B cell (primary cell): ENCODE measurements at regions of chrX and their contacts with region 1.

Region 1: GRCh38 chrX:111244235-111244750 is 26.0 kb downstream of the CAPN6 start:
- DNase-seq: no peak
- ATAC-seq: no peak
- H3K4me3 ChIP-seq: no peak overlapping the region
- H3K4me3 Mint-ChIP-seq: no peak overlapping the region
- H3K27ac ChIP-seq: no peak overlapping the region
- H3K27ac Mint-ChIP-seq: no peak overlapping the region
- H3K4me1 ChIP-seq: no peaks in the 10 kb centered on the region
- H3K4me1 Mint-ChIP-seq: no peaks in the 10 kb centered on the region
- H3K27me3 ChIP-seq: no peaks in the 10 kb centered on the region
- H3K27me3 Mint-ChIP-seq: peaks cover 7% of the 10 kb centered on the region
- CTCF ChIP-seq: no peak

Region 2: GRCh38 chrX:110992611-110993010 is 251.7 kb before region 1 on chrX:
- CTCF ChIA-PET with region 1: no interaction called
- POLR2A ChIA-PET with region 1: no interaction called
- intact Hi-C with region 1: loop called (anchors 5 kb)
- DNase-seq: peak; percentile 15
- ATAC-seq: no peak
- H3K4me3 ChIP-seq: no peak overlapping the region
- H3K4me3 Mint-ChIP-seq: no peak overlapping the region
- H3K27ac ChIP-seq: no peak overlapping the region
- H3K27ac Mint-ChIP-seq: no peak overlapping the region
- H3K4me1 ChIP-seq: no peaks in the 10 kb centered on the region
- H3K4me1 Mint-ChIP-seq: no peaks in the 10 kb centered on the region
- H3K27me3 ChIP-seq: no peaks in the 10 kb centered on the region
- H3K27me3 Mint-ChIP-seq: peaks cover 9% of the 10 kb centered on the region
- CTCF ChIP-seq: peak; percentile 26

Region 3: GRCh38 chrX:111483134-111483533 is 238.8 kb after region 1 on chrX:
- CTCF ChIA-PET with region 1: no interaction called
- POLR2A ChIA-PET with region 1: no interaction called
- intact Hi-C with region 1: no loop called
- DNase-seq: no peak
- ATAC-seq: no peak
- H3K4me3 ChIP-seq: no peak overlapping the region
- H3K4me3 Mint-ChIP-seq: no peak overlapping the region
- H3K27ac ChIP-seq: no peak overlapping the region
- H3K27ac Mint-ChIP-seq: no peak overlapping the region
- H3K4me1 ChIP-seq: no peaks in the 10 kb centered on the region
- H3K4me1 Mint-ChIP-seq: no peaks in the 10 kb centered on the region
- H3K27me3 ChIP-seq: no peaks in the 10 kb centered on the region
- H3K27me3 Mint-ChIP-seq: peaks cover 2% of the 10 kb centered on the region
- CTCF ChIP-seq: no peak